Activated naive CD4-positive, alpha-beta T cell treated with anti-CD3 and anti-CD28 coated beads for 36 hours (primary cell): ENCODE measurements at regions of chr1 and their contacts with region 1.

Region 1: GRCh38 chr1:161132410-161133219 is at the start of gene DEDD:
- DNase-seq: peak; percentile 95
- H3K4me3 Mint-ChIP-seq: no peak within 1 kb of the TSS
- H3K27ac Mint-ChIP-seq: no peak within 1 kb of the TSS
- H3K4me1 Mint-ChIP-seq: peaks cover 44% of the 10 kb centered on the region
- H3K27me3 Mint-ChIP-seq: no peaks in the 10 kb centered on the region
- total RNA-seq, gene DEDD: 29.7 to 34.0 TPM

Region 2: GRCh38 chr1:160830321-160831153 is 302.1 kb before region 1 on chr1:
- CTCF ChIA-PET with region 1: interaction called, 3 read pairs
- intact Hi-C with region 1: loop called (anchors 10 kb)
- DNase-seq: peak; percentile 91
- H3K4me3 Mint-ChIP-seq: no peak overlapping the region
- H3K27ac Mint-ChIP-seq: peak overlapping the region; percentile 32
- H3K4me1 Mint-ChIP-seq: peaks cover 18% of the 10 kb centered on the region
- H3K27me3 Mint-ChIP-seq: no peaks in the 10 kb centered on the region

Region 3: GRCh38 chr1:161119092-161119903 is 13.3 kb before region 1 on chr1:
- CTCF ChIA-PET with region 1: interaction called, 11 read pairs
- intact Hi-C with region 1: loop called (anchors 1 kb)
- DNase-seq: peak; percentile 86
- H3K4me3 Mint-ChIP-seq: peak overlapping the region; percentile 92
- H3K27ac Mint-ChIP-seq: peak overlapping the region; percentile 88
- H3K4me1 Mint-ChIP-seq: peaks cover 64% of the 10 kb centered on the region
- H3K27me3 Mint-ChIP-seq: no peaks in the 10 kb centered on the region

Region 4: DNA sequence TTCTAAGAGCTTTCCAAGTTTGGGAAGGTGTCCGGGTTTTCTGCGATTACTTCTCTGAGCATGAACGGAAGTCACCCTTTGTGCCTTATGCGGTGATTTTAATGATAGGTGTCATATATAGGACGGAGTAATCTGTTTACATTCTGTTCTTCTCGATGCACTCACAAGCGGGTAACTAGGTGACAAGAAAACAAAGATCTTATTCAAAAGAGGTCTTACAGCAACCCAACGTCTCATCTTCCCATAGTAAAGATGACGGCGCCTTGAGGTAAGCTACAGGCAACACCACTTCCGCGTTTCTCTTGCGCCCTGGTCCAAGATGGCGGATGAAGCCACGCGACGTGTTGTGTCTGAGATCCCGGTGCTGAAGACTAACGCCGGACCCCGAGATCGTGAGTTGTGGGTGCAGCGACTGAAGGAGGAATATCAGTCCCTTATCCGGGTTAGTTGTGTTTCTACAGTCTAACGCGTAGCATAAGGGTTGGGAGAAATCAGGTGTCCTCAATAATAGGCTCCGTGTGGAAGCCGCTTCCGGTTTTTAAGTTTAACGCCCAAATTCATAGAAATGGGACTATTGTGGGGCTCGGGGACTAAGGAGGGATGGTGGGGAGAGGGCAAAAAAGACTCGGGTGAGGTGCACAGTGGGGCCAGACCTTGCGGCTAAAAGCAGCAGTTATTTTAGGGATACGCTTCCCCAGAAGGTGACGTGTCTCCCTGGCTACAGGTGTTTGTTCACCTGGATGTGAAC is 21.2 kb after region 1 on chr1 and contains the start of gene UFC1:
- CTCF ChIA-PET with region 1: interaction called, 4 read pairs
- intact Hi-C with region 1: loop called (anchors 1 kb)
- DNase-seq: peak; percentile 88
- H3K4me3 Mint-ChIP-seq: peak within 1 kb of the TSS; percentile 95
- H3K27ac Mint-ChIP-seq: peak within 1 kb of the TSS; percentile 99
- H3K4me1 Mint-ChIP-seq: peaks cover 22% of the 10 kb centered on the region
- H3K27me3 Mint-ChIP-seq: no peaks in the 10 kb centered on the region
- total RNA-seq, gene UFC1: 89.4 to 94.9 TPM

Region 5: DNA sequence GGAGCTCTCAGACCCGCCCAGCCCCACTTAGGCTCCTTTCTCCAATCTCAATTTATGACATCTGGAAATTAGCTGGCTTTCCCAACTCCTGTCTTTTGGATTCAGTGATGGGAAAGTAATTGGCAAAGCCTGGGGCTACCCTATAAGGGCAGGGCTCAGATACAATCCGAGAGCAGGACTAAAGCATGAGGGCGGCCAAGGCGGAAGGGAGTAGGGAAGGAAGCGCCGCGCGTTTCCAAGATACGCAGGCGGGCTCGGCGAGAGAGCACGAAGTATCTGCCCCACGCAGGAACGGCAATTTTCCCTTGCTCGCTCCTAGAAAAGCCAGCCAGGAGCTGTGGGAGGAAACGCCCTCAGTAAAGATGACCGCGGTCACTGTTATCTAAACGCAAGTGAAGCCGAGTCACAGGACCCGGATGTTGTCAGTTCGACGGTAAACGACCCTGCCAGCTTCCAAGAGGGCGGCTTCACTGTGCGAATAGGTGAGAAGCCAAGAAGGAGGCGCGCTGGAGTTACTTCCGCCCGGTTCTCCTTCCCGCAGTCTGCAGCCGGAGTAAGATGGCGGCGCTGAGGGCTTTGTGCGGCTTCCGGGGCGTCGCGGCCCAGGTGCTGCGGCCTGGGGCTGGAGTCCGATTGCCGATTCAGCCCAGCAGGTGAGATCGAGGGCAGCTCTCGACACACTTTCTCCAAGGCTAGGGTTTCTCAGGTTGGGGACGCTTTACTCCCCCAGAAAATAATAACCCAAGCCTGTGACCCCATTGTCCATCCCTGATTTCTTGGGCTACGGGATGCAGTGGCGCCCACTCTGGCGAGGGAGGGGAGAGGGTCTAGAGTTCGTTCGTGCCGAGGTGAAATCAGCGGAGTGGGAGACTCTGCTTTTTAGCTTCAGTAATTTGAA is 69.5 kb after region 1 on chr1 and contains the start of gene NDUFS2:
- CTCF ChIA-PET with region 1: no interaction called
- intact Hi-C with region 1: loop called (anchors 1 kb)
- DNase-seq: peak; percentile 99
- H3K4me3 Mint-ChIP-seq: peak within 1 kb of the TSS; percentile 92
- H3K27ac Mint-ChIP-seq: peak within 1 kb of the TSS; percentile 89
- H3K4me1 Mint-ChIP-seq: peaks cover 75% of the 10 kb centered on the region
- H3K27me3 Mint-ChIP-seq: no peaks in the 10 kb centered on the region
- total RNA-seq, gene NDUFS2: 126 to 130 TPM